ENCODE measurements at regions of chr3 and their contacts with region 1.

Region 1: DNA sequence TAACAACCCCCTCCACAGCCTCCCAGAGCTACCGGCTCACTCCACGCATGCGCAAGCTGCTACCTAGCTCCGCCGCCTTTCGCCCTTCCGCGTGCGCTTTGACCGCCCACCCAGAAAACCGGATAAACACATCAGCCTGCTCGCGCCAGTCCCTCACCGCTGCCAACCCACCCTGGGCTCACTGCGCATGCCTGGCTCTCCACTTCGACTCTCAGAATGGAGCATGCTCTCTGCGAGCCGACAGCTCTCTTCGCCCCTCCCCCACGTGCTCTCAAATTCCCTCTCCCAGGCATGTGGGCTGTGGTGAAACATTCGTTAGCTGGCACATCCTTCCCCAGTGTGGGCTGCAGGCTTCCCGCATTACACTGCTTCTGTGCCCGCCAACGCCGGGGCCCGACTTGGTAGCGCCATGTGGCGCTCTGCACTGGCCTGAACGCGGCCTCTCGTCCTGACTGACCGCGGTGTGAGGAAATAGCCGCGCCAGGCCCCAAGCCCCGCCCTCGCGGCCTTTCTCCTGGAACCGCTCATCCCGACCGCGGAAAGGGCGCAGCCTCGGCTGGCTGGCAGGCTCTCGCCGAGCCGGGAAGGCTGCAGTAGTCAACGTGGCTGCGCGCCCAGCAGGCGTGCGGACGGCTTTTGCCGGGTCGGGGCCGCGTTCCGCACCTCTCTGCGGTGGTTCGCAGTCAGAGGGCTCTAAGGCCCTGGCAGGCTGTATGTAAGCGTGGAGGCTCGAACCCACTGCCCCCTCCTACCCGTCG is 445 bp upstream of the MSL2 start:
- DNase-seq: peak; percentile 98
- H3K4me3 Mint-ChIP-seq: peak overlapping the region; percentile 82
- H3K27ac Mint-ChIP-seq: peak overlapping the region; percentile 92
- H3K4me1 Mint-ChIP-seq: peaks cover 45% of the 10 kb centered on the region
- H3K27me3 Mint-ChIP-seq: no peaks in the 10 kb centered on the region

Region 2: DNA sequence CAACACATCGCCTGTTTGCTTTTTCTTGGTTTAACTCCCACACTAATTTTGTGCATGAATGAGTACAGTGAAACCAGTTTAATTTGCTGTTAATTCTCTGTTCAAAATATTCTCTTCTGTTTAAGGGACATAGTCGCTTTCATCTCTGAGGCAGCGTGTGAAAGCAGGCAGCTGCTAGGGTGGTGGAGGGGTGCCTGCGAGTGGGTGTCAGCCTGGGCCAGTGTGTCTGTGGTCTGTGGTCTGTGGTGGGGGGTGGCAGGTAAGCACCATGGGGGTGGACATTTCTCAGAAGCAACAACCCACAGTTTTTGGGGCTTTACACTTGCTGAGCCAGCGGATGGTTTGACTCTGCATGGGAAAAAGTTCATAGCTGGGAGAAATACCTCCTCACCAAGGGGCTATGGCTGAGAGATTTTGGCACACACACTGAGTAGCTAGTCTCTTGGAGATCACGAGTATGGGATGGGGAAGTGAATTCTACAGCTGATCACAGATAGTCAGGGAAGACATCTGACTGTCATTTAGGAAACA is 1292.3 kb before region 1 on chr3:
- intact Hi-C with region 1: loop called (anchors 10 kb)
- DNase-seq: peak; percentile 15
- H3K4me3 Mint-ChIP-seq: peak overlapping the region; percentile 16
- H3K27ac Mint-ChIP-seq: peak overlapping the region; percentile 77
- H3K4me1 Mint-ChIP-seq: peaks cover 14% of the 10 kb centered on the region
- H3K27me3 Mint-ChIP-seq: peaks cover 26% of the 10 kb centered on the region

Region 3: GRCh38 chr3:136149667-136150066 is 46.9 kb before region 1 on chr3:
- intact Hi-C with region 1: loop called (anchors 2 kb)
- DNase-seq: no peak
- H3K4me3 Mint-ChIP-seq: no peak overlapping the region
- H3K27ac Mint-ChIP-seq: peak overlapping the region; percentile 63
- H3K4me1 Mint-ChIP-seq: peaks cover 44% of the 10 kb centered on the region
- H3K27me3 Mint-ChIP-seq: no peaks in the 10 kb centered on the region

Region 4: DNA sequence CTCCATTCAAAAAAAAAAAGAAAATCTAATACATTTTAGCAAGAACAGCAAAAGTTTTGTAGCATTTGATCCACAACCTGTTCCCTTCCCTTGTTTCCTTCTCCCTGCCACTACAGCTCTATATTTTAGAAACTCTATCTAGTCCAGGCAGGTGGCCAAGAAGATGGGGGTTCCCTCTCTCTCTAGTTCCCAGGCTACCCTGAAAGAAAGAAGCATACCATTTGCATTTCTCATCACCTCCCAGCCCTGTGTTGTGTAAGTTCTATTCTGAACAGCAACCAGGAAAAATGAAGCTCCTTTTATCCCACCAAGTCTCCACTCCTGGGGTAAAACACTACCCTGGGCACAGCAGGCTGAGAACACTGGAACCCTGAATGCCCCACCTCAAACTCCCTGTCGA is 153.6 kb after region 1 on chr3:
- intact Hi-C with region 1: loop called (anchors 2 kb)
- DNase-seq: no peak
- H3K4me3 Mint-ChIP-seq: no peak overlapping the region
- H3K27ac Mint-ChIP-seq: no peak overlapping the region
- H3K4me1 Mint-ChIP-seq: peaks cover 20% of the 10 kb centered on the region
- H3K27me3 Mint-ChIP-seq: no peaks in the 10 kb centered on the region

Region 5: DNA sequence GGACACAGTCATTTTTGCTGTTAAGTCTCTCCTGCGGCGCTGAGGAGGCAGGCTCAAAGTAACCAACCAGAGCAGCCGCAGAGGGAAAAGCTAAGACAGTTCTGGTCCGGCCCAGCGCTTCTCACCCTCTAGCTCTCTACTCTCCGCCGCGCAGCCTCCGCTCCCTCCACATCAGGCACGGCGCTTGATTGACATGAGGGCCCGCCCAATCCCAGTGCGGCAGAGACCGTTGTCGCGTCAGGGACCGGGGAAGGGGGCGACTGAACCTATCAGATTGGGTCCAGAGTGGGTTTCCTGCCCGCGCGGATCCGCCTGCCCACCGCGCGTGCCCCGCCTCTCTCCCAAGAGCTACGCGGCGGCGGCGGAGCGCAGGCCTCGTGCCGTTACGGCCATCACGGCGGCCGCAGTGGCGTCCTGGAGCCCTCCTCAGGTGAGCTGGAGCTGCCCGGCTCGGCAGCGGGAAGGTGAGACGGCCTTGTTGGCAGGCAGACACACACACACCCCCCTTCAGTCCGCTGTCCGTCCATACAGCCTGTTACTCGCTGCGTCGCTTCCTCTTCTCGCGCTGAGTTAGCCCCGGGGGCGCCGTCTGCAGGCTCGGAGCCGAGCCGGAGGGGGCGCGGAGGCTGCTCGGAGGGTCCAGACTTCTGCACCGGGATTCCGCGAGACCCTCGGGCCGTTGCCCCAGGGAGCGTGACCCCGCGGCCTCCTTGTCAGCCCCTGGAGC is 665.5 kb after region 1 on chr3 and contains the start of gene NCK1:
- intact Hi-C with region 1: loop called (anchors 1 kb)
- DNase-seq: peak; percentile 98
- H3K4me3 Mint-ChIP-seq: peak within 1 kb of the TSS; percentile 97
- H3K27ac Mint-ChIP-seq: peak within 1 kb of the TSS; percentile 99
- H3K4me1 Mint-ChIP-seq: peaks cover 55% of the 10 kb centered on the region
- H3K27me3 Mint-ChIP-seq: no peaks in the 10 kb centered on the region
- total RNA-seq, gene NCK1: 33.2 and 33.4 TPM in 2 replicates

Region 6: GRCh38 chr3:138186803-138187295 is 1990.3 kb after region 1 on chr3:
- intact Hi-C with region 1: loop called (anchors 5 kb)
- DNase-seq: peak; percentile 82
- H3K4me3 Mint-ChIP-seq: peak overlapping the region; percentile 95
- H3K27ac Mint-ChIP-seq: peak overlapping the region; percentile 89
- H3K4me1 Mint-ChIP-seq: peaks cover 38% of the 10 kb centered on the region
- H3K27me3 Mint-ChIP-seq: peaks cover 5% of the 10 kb centered on the region